ENCODE measurements at regions of chr3 and their contacts with region 1.

Region 1: GRCh38 chr3:124246949-124247348 is 255.0 kb upstream of the ROPN1 start:
- DNase-seq: no peak
- H3K4me3 ChIP-seq: no peak overlapping the region
- H3K27ac ChIP-seq: peak overlapping the region; percentile 90 to 91
- H3K4me1 ChIP-seq: peaks cover 6 to 45% of the 10 kb centered on the region in 2 donors
- H3K27me3 ChIP-seq: no peaks in the 10 kb centered on the region
- CTCF ChIP-seq: peak in 2 of 3 experiments; percentile 20 to 47

Region 2: DNA sequence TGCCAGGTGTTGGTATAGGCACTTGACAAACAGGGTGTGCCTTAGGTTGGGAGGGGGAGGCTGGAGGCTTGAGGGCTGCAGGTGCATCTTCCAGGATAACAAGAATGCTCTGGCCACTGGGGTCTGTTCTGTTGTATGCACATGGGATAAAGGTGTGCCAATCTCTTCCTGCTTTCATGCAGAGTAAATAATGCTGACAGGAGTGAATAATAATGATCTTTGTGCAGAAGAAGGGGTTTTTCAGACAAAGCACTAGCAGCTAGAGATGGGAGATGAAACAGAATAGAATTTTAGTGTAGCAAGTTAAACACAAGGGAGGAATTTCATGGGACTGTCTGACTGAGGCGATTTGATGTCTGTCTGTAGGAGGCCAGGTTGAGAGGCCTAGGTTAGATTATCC is 253.1 kb before region 1 on chr3:
- intact Hi-C with region 1: no loop called
- DNase-seq: no peak
- H3K4me3 ChIP-seq: no peak overlapping the region
- H3K27ac ChIP-seq: no peak overlapping the region
- H3K4me1 ChIP-seq: peaks cover 0 to 10% of the 10 kb centered on the region in 2 donors
- H3K27me3 ChIP-seq: no peaks in the 10 kb centered on the region
- CTCF ChIP-seq: no peak

Region 3: GRCh38 chr3:124168262-124168661 is 78.7 kb before region 1 on chr3:
- intact Hi-C with region 1: loop called (anchors 5 kb)
- DNase-seq: peak in 1 of 2 donors; percentile 84
- H3K4me3 ChIP-seq: no peak overlapping the region
- H3K27ac ChIP-seq: peak overlapping the region; percentile 29 to 37
- H3K4me1 ChIP-seq: peaks cover 14 to 49% of the 10 kb centered on the region in 2 donors
- H3K27me3 ChIP-seq: no peaks in the 10 kb centered on the region
- CTCF ChIP-seq: no peak

Region 4: GRCh38 chr3:124202754-124203153 is 44.2 kb before region 1 on chr3:
- intact Hi-C with region 1: loop called (anchors 5 kb)
- DNase-seq: peak in 1 of 2 donors; percentile 72
- H3K4me3 ChIP-seq: no peak overlapping the region
- H3K27ac ChIP-seq: peak overlapping the region; percentile 60 to 78
- H3K4me1 ChIP-seq: peaks cover 19 to 62% of the 10 kb centered on the region in 2 donors
- H3K27me3 ChIP-seq: no peaks in the 10 kb centered on the region
- CTCF ChIP-seq: no peak

Region 5: DNA sequence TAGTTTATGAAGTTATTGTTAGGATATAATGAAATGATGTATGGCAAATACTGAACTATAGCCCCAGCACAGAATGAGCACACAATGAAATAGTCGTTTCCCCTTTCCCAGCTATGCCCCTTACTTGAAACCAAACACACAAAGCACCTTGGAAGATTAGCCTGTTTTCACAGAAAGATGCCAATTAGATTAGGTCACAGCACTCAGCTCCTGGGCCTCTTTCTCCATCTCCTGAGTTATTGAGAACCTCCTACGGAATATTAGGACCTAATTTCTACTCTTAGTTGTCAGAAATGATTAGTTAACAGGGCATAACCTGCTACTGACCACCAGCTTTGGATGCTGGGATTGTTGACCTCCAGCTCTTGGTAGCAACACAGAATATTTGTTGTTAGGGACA is 14.4 kb after region 1 on chr3:
- intact Hi-C with region 1: loop called (anchors 1 kb)
- DNase-seq: no peak
- H3K4me3 ChIP-seq: no peak overlapping the region
- H3K27ac ChIP-seq: peak overlapping the region; percentile 70 to 88
- H3K4me1 ChIP-seq: peaks cover 7 to 62% of the 10 kb centered on the region in 2 donors
- H3K27me3 ChIP-seq: no peaks in the 10 kb centered on the region
- CTCF ChIP-seq: no peak